ENCODE measurements at regions of chr6 and their contacts with region 1.

Region 1: DNA sequence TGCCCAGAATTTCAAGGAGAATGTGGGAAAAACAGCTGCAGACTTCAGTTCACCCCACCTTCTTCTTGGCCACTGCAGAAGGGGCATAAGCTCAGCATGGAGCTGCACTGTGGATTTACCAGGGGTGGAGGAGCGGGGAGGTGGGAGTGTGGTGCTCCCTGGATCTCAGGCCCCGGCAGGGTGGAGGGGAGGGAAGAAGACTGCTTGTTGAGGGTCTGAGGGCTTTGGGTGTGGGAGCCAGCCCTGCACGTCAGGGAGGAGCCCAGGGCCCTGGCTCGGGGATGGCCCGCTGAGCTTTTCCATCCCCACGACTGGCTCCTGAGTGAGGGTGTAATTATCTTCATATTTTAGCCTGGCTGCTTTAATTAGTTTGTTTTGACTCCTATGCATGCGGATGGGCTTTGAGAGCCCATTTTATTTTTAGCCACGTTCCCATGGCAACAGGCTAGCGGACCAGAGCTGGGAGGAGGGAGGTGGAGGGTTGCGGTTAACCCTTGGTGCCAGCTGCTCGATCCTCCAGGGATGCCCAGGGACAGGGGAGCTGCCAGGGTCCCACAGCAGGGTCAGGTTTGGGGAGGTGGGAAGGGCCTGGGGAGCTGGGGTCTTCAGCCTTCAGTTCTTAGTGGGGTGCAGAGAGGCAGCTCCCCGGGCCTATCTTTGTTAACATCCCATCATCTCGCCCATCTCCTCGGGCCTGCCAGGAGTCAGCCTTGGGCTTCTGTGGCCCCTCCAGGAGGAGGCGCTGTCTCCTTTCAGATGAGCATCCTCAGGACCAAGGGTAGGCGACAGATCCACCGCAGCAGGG is 68.2 kb downstream of the RAB44 start:
- DNase-seq: peak; percentile 90
- ATAC-seq: peak; percentile 88
- H3K4me3 Mint-ChIP-seq: no peak overlapping the region
- H3K27ac Mint-ChIP-seq: no peak overlapping the region
- H3K4me1 Mint-ChIP-seq: peaks cover 31% of the 10 kb centered on the region
- H3K27me3 Mint-ChIP-seq: no peaks in the 10 kb centered on the region
- CTCF ChIP-seq: peak; percentile 87

Region 2: DNA sequence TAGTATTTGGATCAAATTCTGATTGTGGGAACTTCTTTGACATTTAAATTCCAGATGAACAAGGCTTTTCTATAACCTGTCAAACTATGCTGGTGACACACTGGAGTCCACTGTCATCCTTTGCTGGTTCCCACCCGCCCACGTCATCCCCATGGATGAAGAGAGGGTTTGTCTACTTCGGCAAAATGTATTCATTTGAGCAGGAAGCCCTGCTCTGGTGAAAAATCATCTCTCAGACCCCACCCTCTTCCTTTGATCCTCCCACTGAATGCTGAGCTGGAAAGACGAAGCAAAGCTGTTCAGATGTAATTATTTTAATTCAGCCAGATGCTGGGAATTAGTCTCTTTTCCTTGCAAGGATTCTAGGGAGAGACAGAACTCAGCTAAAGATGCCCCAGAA is 23.0 kb after region 1 on chr6:
- CTCF ChIA-PET with region 1: interaction called, 477 read pairs
- POLR2A ChIA-PET with region 1: interaction called, 4 read pairs
- intact Hi-C with region 1: no loop called
- DNase-seq: peak; percentile 32
- ATAC-seq: no peak
- H3K4me3 Mint-ChIP-seq: no peak overlapping the region
- H3K27ac Mint-ChIP-seq: no peak overlapping the region
- H3K4me1 Mint-ChIP-seq: peaks cover 6% of the 10 kb centered on the region
- H3K27me3 Mint-ChIP-seq: peaks cover 9% of the 10 kb centered on the region
- CTCF ChIP-seq: no peak

Region 3: GRCh38 chr6:36827261-36828079 is 61.7 kb after region 1 on chr6:
- CTCF ChIA-PET with region 1: interaction called, 10 read pairs
- POLR2A ChIA-PET with region 1: no interaction called
- intact Hi-C with region 1: no loop called
- DNase-seq: peak; percentile 52
- ATAC-seq: peak; percentile 78
- H3K4me3 Mint-ChIP-seq: no peak overlapping the region
- H3K27ac Mint-ChIP-seq: no peak overlapping the region
- H3K4me1 Mint-ChIP-seq: peaks cover 4% of the 10 kb centered on the region
- H3K27me3 Mint-ChIP-seq: peaks cover 3% of the 10 kb centered on the region
- CTCF ChIP-seq: no peak

Region 4: GRCh38 chr6:36851149-36851614 is 85.4 kb after region 1 on chr6:
- CTCF ChIA-PET with region 1: interaction called, 97 read pairs
- POLR2A ChIA-PET with region 1: interaction called, 3 read pairs
- intact Hi-C with region 1: loop called (anchors 5 kb)
- DNase-seq: peak; percentile 40
- ATAC-seq: no peak
- H3K4me3 Mint-ChIP-seq: no peak overlapping the region
- H3K27ac Mint-ChIP-seq: no peak overlapping the region
- H3K4me1 Mint-ChIP-seq: peaks cover 7% of the 10 kb centered on the region
- H3K27me3 Mint-ChIP-seq: no peaks in the 10 kb centered on the region
- CTCF ChIP-seq: peak; percentile 94

Measured in activated CD8-positive, alpha-beta T cell treated with anti-CD3 and anti-CD28 coated beads for 36 hours (primary cell).